ENCODE measurements at regions of chr12 and their contacts with region 1.

Region 1: GRCh38 chr12:120971299-120972179 is 6.8 kb upstream of the HNF1A start:
- DNase-seq: peak in 2 of 5 donors; percentile 21 to 33
- ATAC-seq: peak; percentile 74 to 85 (median 78)
- H3K4me3 ChIP-seq: no peak overlapping the region
- H3K27ac ChIP-seq: no peak overlapping the region
- H3K4me1 ChIP-seq: no peaks in the 10 kb centered on the region
- H3K27me3 ChIP-seq: no peaks in the 10 kb centered on the region
- CTCF ChIP-seq: peak; percentile 61 to 82 (median 75)
- POLR2A ChIP-seq: no peak

Region 2: GRCh38 chr12:120586206-120586605 is 385.3 kb before region 1 on chr12:
- intact Hi-C with region 1: loop called (anchors 1 to 5 kb)
- DNase-seq: no peak
- ATAC-seq: no peak
- H3K4me3 ChIP-seq: no peak overlapping the region
- H3K27ac ChIP-seq: no peak overlapping the region
- H3K4me1 ChIP-seq: peaks cover 0 to 37% (median 24%) of the 10 kb centered on the region in 12 donors
- H3K27me3 ChIP-seq: peaks cover 0 to 9% (median 0%) of the 10 kb centered on the region in 9 donors
- CTCF ChIP-seq: no peak
- POLR2A ChIP-seq: no peak

Region 3: DNA sequence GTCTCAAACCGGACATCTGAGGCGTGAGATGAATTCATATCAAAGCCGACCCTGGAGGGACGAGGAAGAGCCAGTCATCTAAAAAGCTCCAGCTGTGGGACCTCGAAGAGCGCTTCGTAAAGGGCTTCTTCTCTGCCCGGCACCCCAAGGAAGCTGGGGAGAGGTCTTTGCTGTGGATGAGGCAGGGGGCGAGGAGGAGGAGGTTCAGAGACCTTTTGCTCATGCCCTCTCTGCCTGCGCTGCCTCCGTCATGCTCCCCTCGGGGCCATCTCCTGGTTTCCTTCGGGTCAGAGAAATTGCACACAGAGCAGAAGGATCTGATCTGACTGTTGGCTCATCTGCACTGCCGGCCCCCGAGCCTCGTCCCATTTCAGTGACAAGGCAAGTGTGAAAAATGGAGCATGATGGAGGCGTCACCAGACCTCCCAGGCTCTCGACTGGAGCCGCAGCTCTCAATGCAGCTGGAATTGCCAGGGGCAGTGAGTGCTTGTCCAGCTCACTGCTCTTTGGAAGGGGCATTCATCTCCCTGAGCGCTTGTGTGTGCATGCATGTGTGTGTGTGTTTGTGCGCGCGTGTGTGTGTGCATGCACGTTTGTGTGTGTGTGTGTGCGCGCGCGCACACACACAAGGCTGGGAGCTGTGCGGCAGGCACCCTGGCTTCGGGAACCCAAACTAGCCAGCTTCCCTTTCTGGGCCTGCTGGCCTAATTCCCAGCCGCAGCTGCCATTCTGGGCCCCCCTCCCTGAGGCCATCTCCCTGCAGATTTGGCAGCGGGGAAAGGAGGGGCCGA is 321.9 kb before region 1 on chr12:
- intact Hi-C with region 1: loop called (anchors 2 to 5 kb)
- DNase-seq: peak in 3 of 5 donors; percentile 23 to 74 (median 61)
- ATAC-seq: peak in 2 of 4 donors; percentile 0 to 3
- H3K4me3 ChIP-seq: peak overlapping the region in 11 of 12 donors; percentile 32 to 61 (median 47)
- H3K27ac ChIP-seq: peak overlapping the region; percentile 31 to 85 (median 68)
- H3K4me1 ChIP-seq: peaks cover 0 to 62% (median 35%) of the 10 kb centered on the region in 12 donors
- H3K27me3 ChIP-seq: peaks cover 0 to 17% (median 4%) of the 10 kb centered on the region in 9 donors
- CTCF ChIP-seq: peak in 2 of 12 donors; percentile 9 to 25
- POLR2A ChIP-seq: no peak

Region 4: DNA sequence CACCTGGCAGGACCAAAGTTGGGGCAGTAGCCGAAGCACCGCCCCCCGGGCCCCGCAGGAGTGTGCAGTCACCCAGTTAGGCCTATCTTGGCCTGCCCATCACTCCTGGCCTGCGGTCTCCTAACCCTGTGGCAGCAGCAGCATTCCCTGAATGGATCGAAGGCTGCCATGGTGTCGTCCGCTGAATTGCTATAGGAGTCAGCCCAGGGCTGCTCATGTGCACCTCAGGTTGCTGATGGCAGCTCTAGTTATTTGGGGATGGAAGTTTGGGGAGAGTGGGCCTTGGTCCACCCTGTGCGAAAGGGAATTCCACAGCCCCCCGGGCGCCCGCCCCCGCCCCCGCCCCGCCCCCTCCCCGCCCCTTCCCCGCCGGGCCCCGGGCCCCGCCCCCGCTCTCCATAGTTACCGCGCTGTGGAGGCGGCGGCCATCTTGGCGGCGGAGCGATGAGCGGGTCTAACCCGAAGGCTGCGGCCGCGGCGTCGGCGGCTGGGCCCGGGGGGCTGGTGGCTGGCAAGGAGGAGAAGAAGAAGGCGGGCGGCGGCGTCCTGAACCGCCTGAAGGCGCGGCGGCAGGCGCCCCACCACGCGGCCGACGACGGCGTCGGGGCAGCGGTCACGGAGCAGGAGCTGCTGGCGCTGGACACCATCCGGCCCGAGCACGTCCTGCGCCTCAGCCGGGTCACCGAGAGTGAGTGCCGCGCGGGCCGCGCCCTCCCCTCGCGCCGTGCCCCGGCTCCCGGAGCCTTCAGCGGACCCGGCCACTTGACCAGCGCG is 261.3 kb before region 1 on chr12 and contains the start of gene UNC119B:
- intact Hi-C with region 1: loop called in 3 of 10 experiments (anchors 1 to 10 kb)
- DNase-seq: peak; percentile 71 to 89 (median 82)
- ATAC-seq: peak; percentile 47 to 95 (median 90)
- H3K4me3 ChIP-seq: peak within 1 kb of the TSS; percentile 54 to 99 (median 82)
- H3K27ac ChIP-seq: peak within 1 kb of the TSS; percentile 70 to 95 (median 90)
- H3K4me1 ChIP-seq: peaks cover 4 to 35% (median 27%) of the 10 kb centered on the region in 12 donors
- H3K27me3 ChIP-seq: no peaks in the 10 kb centered on the region
- CTCF ChIP-seq: no peak
- POLR2A ChIP-seq: no peak
- total RNA-seq, gene UNC119B: 9.1 to 12.6 (median 10.7) TPM

Region 5: GRCh38 chr12:120725659-120726509 is 245.7 kb before region 1 on chr12 and contains the start of gene ACADS:
- intact Hi-C with region 1: loop called in 2 of 10 experiments (anchors 1 to 5 kb)
- DNase-seq: peak; percentile 91 to 96 (median 93)
- ATAC-seq: peak; percentile 94 to 99 (median 99)
- H3K4me3 ChIP-seq: peak within 1 kb of the TSS; percentile 59 to 93 (median 82)
- H3K27ac ChIP-seq: peak within 1 kb of the TSS; percentile 68 to 90 (median 85)
- H3K4me1 ChIP-seq: peaks cover 0 to 29% (median 15%) of the 10 kb centered on the region in 12 donors
- H3K27me3 ChIP-seq: no peaks in the 10 kb centered on the region
- CTCF ChIP-seq: peak in 4 of 12 donors; percentile 1 to 11 (median 4)
- POLR2A ChIP-seq: peak in 1 of 2 donors; percentile 77
- total RNA-seq, gene ACADS: 56.7 to 213 (median 78.8) TPM

Region 6: DNA sequence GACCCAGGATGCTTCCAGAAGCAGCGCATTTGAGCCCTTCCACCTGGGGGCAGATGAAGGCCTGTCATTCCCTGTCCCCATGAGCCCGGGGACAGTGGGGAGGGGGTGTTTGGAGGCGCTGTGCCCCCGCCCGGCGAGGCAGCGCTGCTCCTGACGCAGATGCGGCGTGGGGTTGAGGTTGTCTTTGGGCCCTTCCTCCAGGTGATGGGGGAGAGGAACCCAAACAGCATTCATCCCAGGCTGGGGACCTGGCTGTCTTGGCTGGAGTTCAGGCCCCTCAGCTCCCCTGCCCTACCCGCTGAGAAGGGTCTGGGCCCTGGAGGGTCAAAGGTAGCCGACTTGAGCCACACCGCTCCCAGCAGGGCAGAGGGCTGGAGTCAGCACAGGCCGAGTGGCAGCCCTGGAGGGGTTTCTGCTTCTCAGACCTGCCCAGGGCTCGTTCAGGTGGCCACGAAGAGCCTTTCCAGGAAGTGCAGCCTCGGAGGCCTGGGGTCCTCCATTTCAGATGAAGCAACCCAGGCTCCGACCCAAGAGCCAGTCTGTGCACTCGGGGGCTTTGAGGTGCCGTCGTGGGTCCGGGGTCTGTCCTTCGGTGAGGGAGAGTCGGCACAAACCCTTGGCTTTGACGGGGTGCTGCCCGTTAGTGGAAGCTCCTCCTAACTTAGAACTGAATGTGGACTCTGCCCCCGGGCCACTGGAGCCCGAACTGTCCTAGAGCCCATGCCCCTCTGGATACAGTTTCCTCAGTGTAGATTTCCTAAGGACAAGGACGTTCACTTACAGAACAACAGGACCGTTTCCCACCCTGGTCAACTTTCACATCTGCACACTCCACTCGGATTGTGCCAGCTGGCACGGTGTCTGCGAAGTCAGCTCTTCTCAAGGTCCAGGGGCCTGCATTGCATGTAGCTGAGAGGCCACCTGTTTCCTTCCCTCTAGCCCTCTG is 229.8 kb before region 1 on chr12:
- intact Hi-C with region 1: loop called in 1 of 10 experiments (anchors 10 kb)
- DNase-seq: no peak
- ATAC-seq: peak; percentile 11 to 47 (median 22)
- H3K4me3 ChIP-seq: no peak overlapping the region
- H3K27ac ChIP-seq: no peak overlapping the region
- H3K4me1 ChIP-seq: no peaks in the 10 kb centered on the region
- H3K27me3 ChIP-seq: no peaks in the 10 kb centered on the region
- CTCF ChIP-seq: no peak
- POLR2A ChIP-seq: no peak

Region 7: DNA sequence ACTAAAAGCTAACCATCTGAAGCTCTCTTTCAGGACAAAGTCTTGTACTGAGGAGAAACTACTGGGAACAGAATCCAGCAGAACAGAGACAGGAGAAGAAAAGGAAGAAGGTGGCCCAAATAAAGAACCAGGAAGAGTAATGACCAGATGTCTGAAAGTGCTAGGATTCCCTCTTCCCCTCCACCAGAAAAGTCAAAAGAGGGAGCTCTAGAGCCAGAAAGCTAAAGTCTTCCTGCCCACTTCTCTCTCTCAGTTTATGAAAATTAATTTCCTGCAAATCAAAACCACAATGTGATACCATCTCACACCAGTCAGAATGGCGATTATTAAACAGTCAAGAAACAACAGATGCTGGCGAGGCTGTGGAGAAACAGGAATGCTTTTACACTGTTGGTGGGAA is 114.6 kb before region 1 on chr12:
- intact Hi-C with region 1: loop called in 2 of 10 experiments (anchors 5 to 10 kb)
- DNase-seq: no peak
- ATAC-seq: peak in 1 of 4 donors; percentile 30
- H3K4me3 ChIP-seq: no peak overlapping the region
- H3K27ac ChIP-seq: no peak overlapping the region
- H3K4me1 ChIP-seq: peaks cover 0 to 52% (median 27%) of the 10 kb centered on the region in 12 donors
- H3K27me3 ChIP-seq: no peaks in the 10 kb centered on the region
- CTCF ChIP-seq: peak in 7 of 12 donors; percentile 10 to 47 (median 31)
- POLR2A ChIP-seq: no peak

Measured in heart left ventricle (tissue), 16 donors.